Activated CD4-positive, alpha-beta memory T cell treated with anti-CD3 and anti-CD28 coated beads for 36 hours (primary cell): ENCODE measurements at regions of chr1 and their contacts with region 1.

Region 1: GRCh38 chr1:29550119-29550898 is 314.0 kb downstream of the PTPRU start:
- DNase-seq: no peak
- H3K4me3 Mint-ChIP-seq: no peak overlapping the region
- H3K27ac Mint-ChIP-seq: no peak overlapping the region
- H3K4me1 Mint-ChIP-seq: no peaks in the 10 kb centered on the region
- H3K27me3 Mint-ChIP-seq: no peaks in the 10 kb centered on the region

Region 2: GRCh38 chr1:29502911-29503840 is 47.1 kb before region 1 on chr1:
- CTCF ChIA-PET with region 1: no interaction called
- POLR2A ChIA-PET with region 1: no interaction called
- intact Hi-C with region 1: no loop called
- DNase-seq: no peak
- H3K4me3 Mint-ChIP-seq: no peak overlapping the region
- H3K27ac Mint-ChIP-seq: no peak overlapping the region
- H3K4me1 Mint-ChIP-seq: no peaks in the 10 kb centered on the region
- H3K27me3 Mint-ChIP-seq: peaks cover 39% of the 10 kb centered on the region

Region 3: DNA sequence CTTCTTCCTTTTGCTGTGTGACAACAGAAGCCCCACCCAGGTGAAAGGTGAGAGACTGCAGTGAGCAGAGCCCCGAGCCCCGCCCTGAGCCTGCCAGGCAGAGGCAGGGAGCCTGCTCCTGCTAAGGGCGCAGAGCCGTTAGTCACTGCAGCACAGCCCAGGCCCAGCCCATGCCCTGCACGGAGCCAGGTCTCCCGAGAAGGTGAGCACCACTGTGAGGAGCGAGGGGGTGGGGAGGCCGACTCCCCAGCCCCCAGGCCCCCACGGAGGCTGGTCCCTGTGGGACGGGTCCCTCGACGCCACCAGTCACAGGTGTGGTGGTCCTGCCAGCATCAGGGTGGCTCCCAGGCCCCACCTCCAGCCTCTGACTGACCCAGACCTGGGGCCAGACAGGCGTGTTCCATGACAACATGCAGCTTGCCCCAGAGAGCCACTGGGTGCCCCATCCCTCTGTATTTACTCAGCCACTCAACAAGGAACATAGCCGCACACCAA is 1107.5 kb after region 1 on chr1:
- CTCF ChIA-PET with region 1: no interaction called
- POLR2A ChIA-PET with region 1: no interaction called
- intact Hi-C with region 1: loop called (anchors 5 kb)
- DNase-seq: no peak
- H3K4me3 Mint-ChIP-seq: no peak overlapping the region
- H3K27ac Mint-ChIP-seq: no peak overlapping the region
- H3K4me1 Mint-ChIP-seq: no peaks in the 10 kb centered on the region
- H3K27me3 Mint-ChIP-seq: peaks cover 13% of the 10 kb centered on the region